ENCODE measurements at regions of chr9 and their contacts with region 1.

Region 1: GRCh38 chr9:4849364-4849763 is 56.6 kb downstream of the RCL1 start:
- DNase-seq: no peak
- ATAC-seq: peak; percentile 11; the same call in 1 of the 3 replicates
- H3K4me3 ChIP-seq: no peak overlapping the region
- H3K27ac ChIP-seq: peak overlapping the region; percentile 59; the same call in 2 of the 3 replicates
- H3K4me1 ChIP-seq: peaks cover 36 to 56% of the 10 kb centered on the region in 2 experiments
- H3K27me3 ChIP-seq: no peaks in the 10 kb centered on the region
- CTCF ChIP-seq: peak in 2 of 3 experiments; percentile 22 to 44; a peak in 1 of 6 replicates
- EP300 ChIP-seq: no peak
- POLR2A ChIP-seq: no peak
- RAD21 ChIP-seq: peak in 1 of 2 experiments; percentile 54; a peak in 3 of 4 replicates

Region 2: DNA sequence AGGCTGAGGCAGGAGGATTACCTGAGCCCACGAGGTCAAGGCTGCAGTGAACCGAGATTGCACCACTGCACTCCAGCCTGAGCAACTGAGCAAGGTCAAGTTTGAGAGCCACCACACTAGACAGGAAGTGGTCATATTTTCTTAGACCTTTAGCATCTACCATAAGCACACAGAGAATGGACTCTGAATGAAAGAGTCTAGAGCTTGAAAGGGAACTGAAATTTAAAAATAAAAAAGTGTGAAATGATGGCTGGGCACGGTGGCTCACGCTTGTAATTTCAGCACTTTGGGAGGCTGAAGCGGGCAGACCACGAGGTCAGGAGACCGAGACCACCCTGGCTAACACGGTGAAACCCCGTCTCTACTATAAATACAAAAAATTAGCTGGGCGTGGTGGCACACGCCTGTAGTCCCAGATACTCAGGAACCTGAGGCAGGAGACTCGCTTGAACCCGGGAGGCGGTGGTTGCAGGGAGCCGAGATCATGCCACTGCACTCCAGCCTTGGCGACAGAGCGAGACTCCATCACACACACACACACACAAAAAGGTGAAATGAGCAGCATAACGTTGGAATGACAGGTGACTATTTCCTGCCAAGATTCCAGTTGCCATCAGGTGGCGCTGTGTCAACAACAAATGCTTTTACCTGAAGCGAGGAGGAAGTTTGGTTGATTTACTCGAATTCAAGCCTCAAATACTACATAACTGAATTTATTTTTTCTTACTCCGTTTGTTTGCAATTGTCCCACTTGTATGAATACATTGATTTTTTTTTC is 87.1 kb before region 1 on chr9:
- CTCF ChIA-PET with region 1: no interaction called
- POLR2A ChIA-PET with region 1: interaction called, 3 read pairs
- in situ Hi-C with region 1: no loop called
- intact Hi-C with region 1: loop called (anchors 2 kb)
- DNase-seq: peak; percentile 25 to 86 (median 38)
- ATAC-seq: peak; percentile 75
- H3K4me3 ChIP-seq: peak overlapping the region; percentile 7; the same call in 1 of the 2 replicates
- H3K27ac ChIP-seq: peak overlapping the region; percentile 62
- H3K4me1 ChIP-seq: peaks cover 8 to 12% of the 10 kb centered on the region in 2 experiments; a peak in 4 of 5 replicates
- H3K27me3 ChIP-seq: no peaks in the 10 kb centered on the region
- CTCF ChIP-seq: peak; percentile 71 to 83 (median 76)
- EP300 ChIP-seq: no peak
- POLR2A ChIP-seq: no peak
- RAD21 ChIP-seq: peak; percentile 82 to 92

Region 3: GRCh38 chr9:4792572-4793458 is 56.5 kb before region 1 on chr9 and contains the start of gene RCL1:
- CTCF ChIA-PET with region 1: no interaction called
- POLR2A ChIA-PET with region 1: interaction called, 14 read pairs
- in situ Hi-C with region 1: no loop called
- intact Hi-C with region 1: loop called (anchors 5 kb)
- DNase-seq: peak; percentile 92 to 95 (median 94)
- ATAC-seq: peak; percentile 97
- H3K4me3 ChIP-seq: peak within 1 kb of the TSS; percentile 91
- H3K27ac ChIP-seq: peak within 1 kb of the TSS; percentile 91
- H3K4me1 ChIP-seq: peaks cover 10 to 16% of the 10 kb centered on the region in 2 experiments; a peak in 4 of 5 replicates
- H3K27me3 ChIP-seq: no peaks in the 10 kb centered on the region
- CTCF ChIP-seq: no peak
- EP300 ChIP-seq: no peak
- POLR2A ChIP-seq: peak; percentile 81
- RAD21 ChIP-seq: no peak
- polyA plus RNA-seq, gene RCL1: 36.9 to 46.1 TPM

Region 4: GRCh38 chr9:4862506-4863250 is 13.3 kb after region 1 on chr9:
- CTCF ChIA-PET with region 1: no interaction called
- POLR2A ChIA-PET with region 1: interaction called, 33 read pairs
- in situ Hi-C with region 1: no loop called
- intact Hi-C with region 1: loop called (anchors 1 kb)
- DNase-seq: peak; percentile 79 to 93 (median 82)
- ATAC-seq: peak; percentile 80
- H3K4me3 ChIP-seq: no peak overlapping the region
- H3K27ac ChIP-seq: peak overlapping the region; percentile 83
- H3K4me1 ChIP-seq: peaks cover 49 to 81% of the 10 kb centered on the region in 2 experiments
- H3K27me3 ChIP-seq: no peaks in the 10 kb centered on the region
- CTCF ChIP-seq: no peak
- EP300 ChIP-seq: peak; percentile 98
- POLR2A ChIP-seq: no peak
- RAD21 ChIP-seq: peak in 1 of 2 experiments; percentile 17; a peak in 1 of 4 replicates

Measured in K562 (cell line).